ENCODE measurements at regions of chr5 and their contacts with region 1.

Region 1: DNA sequence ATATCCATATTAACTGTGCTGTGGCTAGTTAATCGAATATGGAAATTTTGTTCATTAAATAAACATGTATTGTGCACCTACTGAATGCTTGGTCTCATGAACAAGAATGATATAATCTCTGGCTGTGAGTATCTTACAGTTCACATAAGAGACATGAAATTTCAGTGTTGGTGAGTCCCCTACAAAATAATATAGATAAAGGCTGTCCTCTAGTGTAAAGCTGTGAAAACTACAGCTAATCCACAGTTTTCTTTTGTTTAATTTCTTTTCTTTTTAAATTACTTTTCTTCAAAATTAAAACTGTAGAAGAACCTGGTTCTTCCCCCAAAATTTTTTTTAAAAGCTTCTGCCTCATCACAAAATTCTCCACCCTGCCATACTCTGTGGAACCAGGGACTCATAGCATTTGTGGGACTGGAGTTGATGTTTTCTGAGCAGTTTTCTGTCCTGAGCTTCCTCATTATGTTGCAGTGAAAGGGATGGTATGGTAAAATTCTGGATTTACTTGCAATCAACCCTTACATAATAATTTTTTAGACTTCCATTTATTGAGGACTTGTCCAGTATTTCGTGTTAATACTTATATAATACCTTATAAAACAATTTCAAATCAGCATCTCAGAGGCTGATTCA is 135.0 kb downstream of the STK32A start:
- DNase-seq: no peak
- H3K4me3 ChIP-seq: no peak overlapping the region
- H3K27ac ChIP-seq: no peak overlapping the region
- H3K27me3 ChIP-seq: peaks cover 0 to 10% (median 0%) of the 10 kb centered on the region in 45 donors
- CTCF ChIP-seq: peak; percentile 37 to 84 (median 66)

Region 2: DNA sequence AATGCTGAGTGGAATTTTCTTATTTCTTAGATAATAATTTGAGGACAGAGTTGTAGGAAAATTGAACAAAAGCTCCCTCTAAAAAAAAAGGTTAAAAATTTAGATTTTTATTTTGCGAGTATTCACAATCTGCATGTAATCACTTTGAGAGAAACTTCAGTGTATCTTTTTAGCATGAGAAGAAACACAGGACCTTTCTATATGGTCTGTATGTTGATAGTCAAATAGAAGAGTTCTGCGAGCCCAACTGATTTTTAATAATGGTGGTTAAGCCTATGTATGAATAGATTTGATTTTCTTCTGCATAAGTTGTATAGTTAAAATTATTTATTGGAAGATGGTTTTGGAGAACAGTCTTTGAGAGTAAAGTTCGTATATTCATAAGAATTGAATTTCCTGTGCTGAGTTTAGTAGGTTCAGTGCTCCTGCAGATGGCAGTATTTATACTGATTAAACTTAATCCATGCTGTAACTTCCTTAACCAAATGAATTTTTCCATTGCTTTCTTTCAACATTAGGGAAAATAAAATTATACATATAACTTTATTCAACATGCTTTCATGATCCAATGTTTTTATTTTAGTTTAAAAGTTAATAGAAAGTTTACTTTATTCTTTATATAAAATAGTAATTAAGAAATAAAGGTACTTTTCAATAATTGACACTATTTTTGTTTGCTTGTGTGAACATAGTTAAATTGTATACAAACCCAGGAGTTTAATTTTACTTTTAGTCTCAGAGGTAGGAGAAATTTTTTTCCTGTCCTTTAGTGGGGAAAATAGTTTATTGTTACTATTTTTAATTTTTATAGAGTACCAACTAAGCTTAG is 903.1 kb before region 1 on chr5:
- intact Hi-C with region 1: loop called in 1 of 2 experiments (anchors 10 kb)
- DNase-seq: no peak
- H3K4me3 ChIP-seq: no peak overlapping the region
- H3K27ac ChIP-seq: no peak overlapping the region
- H3K27me3 ChIP-seq: no peaks in the 10 kb centered on the region
- CTCF ChIP-seq: peak in 53 of 56 donors; percentile 17 to 73 (median 56)

Region 3: DNA sequence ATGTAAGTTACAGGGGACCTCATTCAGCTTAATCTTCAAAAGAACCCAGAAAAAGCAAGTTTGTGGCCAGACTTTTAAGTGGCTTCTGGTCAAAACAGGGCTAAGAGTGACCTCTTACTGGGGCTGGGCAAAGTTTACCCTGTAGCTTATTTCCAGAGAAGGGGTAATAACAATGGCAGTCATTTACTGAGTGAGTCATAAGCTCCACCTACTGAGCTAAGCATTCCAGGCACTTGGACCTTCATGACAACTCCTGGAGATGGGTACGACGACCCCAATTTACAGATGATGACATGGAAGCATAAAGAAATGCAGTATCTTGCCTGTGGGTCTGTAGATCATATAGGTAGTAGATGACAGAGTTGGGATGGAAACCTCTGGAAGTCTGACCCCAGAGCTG is 849.1 kb before region 1 on chr5:
- intact Hi-C with region 1: loop called in 1 of 2 experiments (anchors 5 kb)
- DNase-seq: no peak
- H3K4me3 ChIP-seq: no peak overlapping the region
- H3K27ac ChIP-seq: no peak overlapping the region
- H3K27me3 ChIP-seq: no peaks in the 10 kb centered on the region
- CTCF ChIP-seq: no peak

Region 4: DNA sequence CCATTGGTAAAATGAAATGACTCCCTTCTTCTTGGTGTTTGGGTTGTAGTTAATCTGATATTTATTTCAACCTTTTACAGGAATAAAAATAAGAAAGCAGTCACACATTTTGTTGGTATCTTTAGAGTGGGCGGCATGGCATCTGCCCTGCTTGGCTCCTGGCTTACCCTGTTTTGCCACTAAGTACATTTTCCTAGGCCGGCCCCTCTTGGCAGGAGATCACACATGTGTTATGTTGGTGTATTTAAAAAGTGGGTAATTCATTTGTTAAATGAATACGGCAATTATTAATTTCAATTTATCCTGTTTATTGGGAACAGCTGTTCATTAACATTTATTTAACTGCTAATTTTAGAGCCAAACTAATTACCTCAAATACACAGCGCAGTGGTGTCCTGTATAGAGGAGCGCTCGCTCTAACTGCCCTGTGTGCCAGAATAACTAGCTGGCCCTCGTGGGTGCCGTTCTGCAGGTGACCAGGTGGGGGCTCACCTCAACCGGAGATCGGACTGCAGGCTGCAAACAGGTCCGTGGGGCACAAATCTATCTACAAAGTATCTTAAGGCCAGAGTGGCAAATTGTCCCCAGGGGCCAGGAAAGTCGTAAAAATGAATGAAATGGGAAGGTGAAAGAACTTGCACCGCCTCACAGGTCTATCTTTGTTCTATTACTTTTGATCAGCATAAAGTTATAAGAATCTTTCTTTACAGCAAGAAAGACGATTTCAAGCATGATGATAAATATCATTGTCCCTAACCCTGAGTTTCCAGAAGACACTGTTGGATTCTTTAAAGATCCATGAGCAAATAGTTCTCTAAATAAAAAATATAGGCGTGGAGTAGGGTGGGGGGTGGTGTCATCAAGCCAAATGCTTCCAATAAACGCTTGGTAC is 827.7 kb before region 1 on chr5:
- intact Hi-C with region 1: loop called in 1 of 2 experiments (anchors 10 kb)
- DNase-seq: peak; percentile 69 to 86 (median 83)
- H3K4me3 ChIP-seq: peak overlapping the region in 2 of 59 donors; percentile 2 to 21
- H3K27ac ChIP-seq: no peak overlapping the region
- H3K27me3 ChIP-seq: no peaks in the 10 kb centered on the region
- CTCF ChIP-seq: peak; percentile 62 to 92 (median 82)

Region 5: DNA sequence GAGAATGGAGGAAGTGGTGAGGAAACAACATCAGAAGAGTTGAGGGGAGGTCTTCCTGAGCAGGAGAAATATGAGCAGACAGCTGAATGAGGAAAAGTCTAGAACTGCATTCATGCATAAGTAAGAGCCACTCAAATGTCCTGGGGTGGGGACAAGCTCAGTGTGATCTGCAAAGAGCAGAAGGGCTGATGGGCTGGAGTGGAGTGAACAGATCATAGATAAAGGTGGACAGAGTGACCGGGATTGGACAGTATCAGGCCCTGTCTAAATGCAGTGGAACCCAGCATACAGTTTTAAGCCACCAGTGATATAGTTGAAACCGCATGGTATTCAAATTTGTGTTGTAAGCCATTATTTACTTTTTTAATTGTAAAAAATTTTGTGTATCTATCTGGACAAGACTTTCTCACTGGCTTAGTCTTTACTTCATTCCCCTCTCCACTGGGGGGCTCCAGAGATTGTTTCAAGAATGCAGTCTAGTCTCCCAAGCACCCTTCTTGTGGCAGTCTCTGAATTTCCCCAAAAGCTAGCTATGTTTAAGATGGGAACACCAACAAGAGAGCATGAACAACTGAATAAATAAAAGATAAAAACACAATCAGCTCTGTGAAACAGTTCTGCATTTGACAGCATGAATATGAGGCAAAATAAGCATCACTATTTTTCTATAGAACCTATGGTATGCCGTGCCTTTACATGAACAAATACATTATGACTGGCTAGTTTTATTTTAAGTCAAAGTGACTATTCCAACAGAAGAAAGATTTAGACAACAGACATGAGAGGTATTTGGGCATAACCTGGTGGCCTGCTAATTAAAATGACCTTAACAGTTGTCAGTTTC is 145.7 kb before region 1 on chr5:
- intact Hi-C with region 1: loop called (anchors 2 to 5 kb)
- DNase-seq: peak in 2 of 10 donors; percentile 9 to 42
- H3K4me3 ChIP-seq: no peak overlapping the region
- H3K27ac ChIP-seq: no peak overlapping the region
- H3K27me3 ChIP-seq: peaks cover 0 to 7% (median 0%) of the 10 kb centered on the region in 45 donors
- CTCF ChIP-seq: peak; percentile 21 to 78 (median 56)

Region 6: DNA sequence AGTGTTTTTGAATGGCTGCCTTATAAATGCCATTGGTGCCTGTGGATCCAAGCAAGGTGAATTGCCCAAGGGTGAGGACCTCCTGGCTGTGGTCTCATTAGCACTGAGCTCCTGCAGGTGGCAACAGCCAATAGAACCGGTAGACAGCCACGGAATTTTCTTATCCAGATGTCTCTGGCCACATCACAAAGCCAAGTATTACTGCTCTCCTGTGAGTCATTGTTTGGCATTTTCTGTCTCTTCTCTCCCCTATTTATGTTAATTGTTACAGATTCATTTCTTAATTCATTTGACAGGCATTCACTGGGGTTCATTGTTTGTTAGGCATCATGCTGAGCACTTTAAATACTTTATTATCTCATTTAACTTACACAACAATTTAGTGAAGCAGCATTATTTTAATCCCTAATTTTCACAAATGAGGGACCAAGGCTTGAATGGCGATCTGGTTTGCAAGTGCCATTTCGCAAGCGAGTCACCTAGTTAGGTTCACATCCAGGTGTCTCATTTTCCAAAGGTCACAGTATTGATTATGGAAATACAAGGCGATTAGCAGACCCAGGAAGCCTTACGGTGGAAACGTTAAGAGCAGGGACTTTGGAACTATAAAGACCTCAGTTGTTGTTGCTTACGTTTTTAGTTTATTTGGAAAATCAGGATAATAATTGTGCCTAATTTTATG is 198.2 kb after region 1 on chr5:
- intact Hi-C with region 1: no loop called
- DNase-seq: no peak
- H3K4me3 ChIP-seq: no peak overlapping the region
- H3K27ac ChIP-seq: no peak overlapping the region
- H3K27me3 ChIP-seq: no peaks in the 10 kb centered on the region
- CTCF ChIP-seq: no peak

Measured in dorsolateral prefrontal cortex (tissue), 120 donors.